ENCODE measurements at regions of chr15 and their contacts with region 1.

Region 1: GRCh38 chr15:74842581-74843444 is at the start of gene ULK3:
- DNase-seq: peak; percentile 84 to 97 (median 92)
- ATAC-seq: peak; percentile 91
- H3K4me3 ChIP-seq: peak within 1 kb of the TSS; percentile 95
- H3K4me3 Mint-ChIP-seq: peak within 1 kb of the TSS; percentile 93
- H3K27ac ChIP-seq: peak within 1 kb of the TSS; percentile 69 to 82
- H3K27ac Mint-ChIP-seq: peak within 1 kb of the TSS; percentile 86
- H3K4me1 ChIP-seq: peaks cover 61% of the 10 kb centered on the region
- H3K4me1 Mint-ChIP-seq: peaks cover 56% of the 10 kb centered on the region
- H3K27me3 ChIP-seq: no peaks in the 10 kb centered on the region
- H3K27me3 Mint-ChIP-seq: no peaks in the 10 kb centered on the region
- CTCF ChIP-seq: peak; percentile 56
- total RNA-seq, gene ULK3: 37.8 to 38.9 TPM

Region 2: GRCh38 chr15:74695597-74696397 is 147.0 kb before region 1 on chr15 and contains the start of gene EDC3:
- CTCF ChIA-PET with region 1: no interaction called
- POLR2A ChIA-PET with region 1: no interaction called
- intact Hi-C with region 1: loop called in 1 of 2 experiments (anchors 10 kb)
- DNase-seq: peak; percentile 70 to 93 (median 80)
- ATAC-seq: peak; percentile 86
- H3K4me3 ChIP-seq: peak within 1 kb of the TSS; percentile 78
- H3K4me3 Mint-ChIP-seq: peak within 1 kb of the TSS; percentile 100
- H3K27ac ChIP-seq: peak within 1 kb of the TSS; percentile 60 to 83
- H3K27ac Mint-ChIP-seq: peak within 1 kb of the TSS; percentile 98
- H3K4me1 ChIP-seq: peaks cover 16% of the 10 kb centered on the region
- H3K4me1 Mint-ChIP-seq: peaks cover 44% of the 10 kb centered on the region
- H3K27me3 ChIP-seq: no peaks in the 10 kb centered on the region
- H3K27me3 Mint-ChIP-seq: peaks cover under 1% of the 10 kb centered on the region
- CTCF ChIP-seq: no peak
- total RNA-seq, gene EDC3: 11.0 to 11.1 TPM

Region 3: DNA sequence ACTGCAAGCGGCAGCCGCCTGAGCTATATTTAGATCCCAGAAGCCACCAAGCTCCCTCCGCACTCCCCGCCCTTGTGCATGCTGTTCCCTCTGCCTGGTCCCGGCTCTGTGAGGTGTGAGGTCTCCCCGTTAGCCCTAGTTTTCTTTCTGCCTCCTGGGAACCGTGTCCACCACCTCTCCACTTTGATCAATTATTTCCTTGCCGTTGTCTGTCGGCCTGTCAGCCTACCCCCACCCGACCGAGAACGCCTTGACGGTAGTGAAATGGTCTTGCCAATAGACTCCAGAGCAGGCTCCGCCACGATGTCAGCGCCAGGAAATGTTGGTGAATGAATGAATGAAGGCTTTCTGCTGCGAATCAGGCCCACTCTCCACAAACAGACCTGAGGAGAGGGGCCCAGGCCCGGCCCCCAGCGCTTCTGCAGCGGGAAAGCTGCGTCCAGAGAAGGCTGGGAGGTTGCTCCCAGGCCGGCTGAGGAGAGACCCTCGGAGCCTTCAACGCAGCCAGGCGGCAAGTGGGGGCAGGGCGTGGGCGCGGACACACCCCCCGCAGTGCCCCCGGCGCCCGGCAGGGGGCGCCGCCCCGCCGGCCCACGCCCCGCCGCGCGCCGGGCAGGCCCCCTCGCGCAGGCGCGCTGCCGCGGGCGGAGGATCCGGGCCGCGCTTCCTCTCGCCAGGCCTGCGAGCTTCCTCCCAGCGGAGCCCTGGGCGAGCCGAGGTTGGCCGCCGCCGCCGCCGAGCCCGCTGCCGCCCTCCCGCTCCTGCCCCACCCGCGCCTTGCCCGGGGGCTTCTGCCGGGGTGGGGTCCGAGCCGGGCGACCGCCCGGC is 61.2 kb before region 1 on chr15 and contains the start of gene CSK:
- CTCF ChIA-PET with region 1: interaction called, 6 read pairs
- POLR2A ChIA-PET with region 1: interaction called, 7 read pairs
- intact Hi-C with region 1: loop called (anchors 2 to 5 kb)
- DNase-seq: peak; percentile 59 to 94 (median 80)
- ATAC-seq: peak; percentile 59
- H3K4me3 ChIP-seq: peak within 1 kb of the TSS; percentile 100
- H3K4me3 Mint-ChIP-seq: peak within 1 kb of the TSS; percentile 90
- H3K27ac ChIP-seq: peak within 1 kb of the TSS; percentile 84 to 93
- H3K27ac Mint-ChIP-seq: peak within 1 kb of the TSS; percentile 94
- H3K4me1 ChIP-seq: peaks cover 88% of the 10 kb centered on the region
- H3K4me1 Mint-ChIP-seq: peaks cover 65% of the 10 kb centered on the region
- H3K27me3 ChIP-seq: no peaks in the 10 kb centered on the region
- H3K27me3 Mint-ChIP-seq: no peaks in the 10 kb centered on the region
- CTCF ChIP-seq: peak; percentile 59
- total RNA-seq, gene CSK: 114 to 118 TPM

Region 4: DNA sequence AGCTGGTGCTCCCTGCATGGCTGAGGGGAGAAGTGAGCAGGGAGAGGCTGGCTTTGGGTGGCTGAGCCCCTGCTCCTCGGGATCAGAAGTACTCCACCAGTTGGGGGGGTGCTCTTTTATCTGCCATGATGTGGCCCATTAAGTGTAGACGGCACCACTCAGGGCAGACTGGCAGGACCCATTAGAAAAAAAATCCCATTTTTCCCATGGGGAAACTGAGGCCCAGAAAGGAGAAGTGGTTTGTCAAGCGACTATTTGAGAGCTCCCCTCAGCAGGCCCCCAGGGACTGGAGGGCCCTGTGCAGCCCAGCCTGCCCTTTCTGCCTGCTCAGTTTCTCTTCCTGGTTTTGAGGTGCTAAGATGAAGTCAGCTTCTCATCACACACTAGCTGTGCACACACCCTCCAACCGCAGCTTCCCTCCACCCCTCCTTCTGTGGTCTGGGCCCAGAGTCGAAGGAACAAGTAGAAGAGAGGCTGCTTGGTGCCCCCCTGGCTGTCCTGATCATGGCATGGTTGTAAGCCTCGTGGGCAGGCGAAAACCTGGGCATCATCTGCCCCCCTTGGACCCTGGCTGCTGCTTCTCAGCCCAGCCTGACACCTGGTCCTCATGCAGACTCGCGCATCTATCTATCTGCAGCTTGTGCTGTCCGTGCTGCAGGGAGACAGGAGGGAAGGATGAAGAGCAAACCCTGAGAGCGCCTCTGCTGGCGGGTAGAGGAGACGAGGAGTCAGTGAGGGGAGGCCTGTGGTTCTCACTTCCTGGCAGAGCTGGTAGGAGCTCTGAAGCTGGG is 55.4 kb before region 1 on chr15:
- CTCF ChIA-PET with region 1: interaction called, 7 read pairs
- POLR2A ChIA-PET with region 1: interaction called, 10 read pairs
- intact Hi-C with region 1: loop called in 1 of 2 experiments (anchors 5 kb)
- DNase-seq: peak; percentile 78 to 98 (median 84)
- ATAC-seq: peak; percentile 72
- H3K4me3 ChIP-seq: peak overlapping the region; percentile 100
- H3K4me3 Mint-ChIP-seq: peak overlapping the region; percentile 90
- H3K27ac ChIP-seq: peak overlapping the region; percentile 69 to 93
- H3K27ac Mint-ChIP-seq: peak overlapping the region; percentile 94
- H3K4me1 ChIP-seq: peaks cover 91% of the 10 kb centered on the region
- H3K4me1 Mint-ChIP-seq: peaks cover 71% of the 10 kb centered on the region
- H3K27me3 ChIP-seq: no peaks in the 10 kb centered on the region
- H3K27me3 Mint-ChIP-seq: no peaks in the 10 kb centered on the region
- CTCF ChIP-seq: peak; percentile 83

Region 5: DNA sequence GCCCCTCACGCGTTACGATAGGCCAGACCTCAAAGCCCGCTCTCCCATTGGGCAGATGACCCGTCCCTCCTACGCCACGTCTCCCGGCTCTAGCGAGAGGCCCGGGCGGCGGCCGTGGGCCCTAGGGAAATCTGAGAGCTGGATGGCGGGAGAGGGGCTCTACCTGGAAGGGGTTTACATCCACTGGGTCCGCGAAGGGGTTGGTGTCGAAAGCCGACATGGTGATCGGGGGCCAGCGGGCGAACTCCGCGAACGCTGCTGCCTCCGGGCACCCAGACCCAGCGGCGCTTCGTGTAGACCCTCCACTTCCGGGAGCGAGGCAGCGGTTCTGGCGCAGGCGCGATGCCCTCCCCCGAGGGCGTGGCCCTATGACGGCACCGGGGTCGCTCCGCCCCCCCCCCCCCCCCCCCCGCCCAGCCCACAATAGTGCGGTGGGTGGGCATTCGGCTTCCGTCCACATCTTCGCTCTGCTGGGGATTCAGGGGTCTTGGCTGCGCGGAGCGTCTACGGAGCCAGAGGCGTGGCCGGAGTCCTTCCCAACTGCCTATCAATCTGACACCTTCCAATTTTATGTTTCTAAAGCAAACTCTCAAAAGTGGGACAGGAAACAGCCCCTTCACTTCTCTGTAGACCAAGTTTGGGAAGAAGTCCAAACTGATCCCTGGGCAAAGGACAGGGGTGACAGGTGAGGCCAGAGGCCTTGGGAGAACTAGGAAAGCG is 30.4 kb after region 1 on chr15 and contains the start of gene SCAMP2:
- CTCF ChIA-PET with region 1: interaction called, 6 read pairs
- POLR2A ChIA-PET with region 1: interaction called, 7 read pairs
- intact Hi-C with region 1: loop called (anchors 1 to 2 kb)
- DNase-seq: peak; percentile 79 to 95 (median 86)
- ATAC-seq: peak; percentile 90
- H3K4me3 ChIP-seq: peak within 1 kb of the TSS; percentile 65
- H3K4me3 Mint-ChIP-seq: peak within 1 kb of the TSS; percentile 94
- H3K27ac ChIP-seq: peak within 1 kb of the TSS; percentile 93 to 94
- H3K27ac Mint-ChIP-seq: peak within 1 kb of the TSS; percentile 90
- H3K4me1 ChIP-seq: peaks cover 50% of the 10 kb centered on the region
- H3K4me1 Mint-ChIP-seq: peaks cover 45% of the 10 kb centered on the region
- H3K27me3 ChIP-seq: no peaks in the 10 kb centered on the region
- H3K27me3 Mint-ChIP-seq: no peaks in the 10 kb centered on the region
- CTCF ChIP-seq: no peak
- total RNA-seq, gene SCAMP2: 56.1 to 56.9 TPM

Region 6: DNA sequence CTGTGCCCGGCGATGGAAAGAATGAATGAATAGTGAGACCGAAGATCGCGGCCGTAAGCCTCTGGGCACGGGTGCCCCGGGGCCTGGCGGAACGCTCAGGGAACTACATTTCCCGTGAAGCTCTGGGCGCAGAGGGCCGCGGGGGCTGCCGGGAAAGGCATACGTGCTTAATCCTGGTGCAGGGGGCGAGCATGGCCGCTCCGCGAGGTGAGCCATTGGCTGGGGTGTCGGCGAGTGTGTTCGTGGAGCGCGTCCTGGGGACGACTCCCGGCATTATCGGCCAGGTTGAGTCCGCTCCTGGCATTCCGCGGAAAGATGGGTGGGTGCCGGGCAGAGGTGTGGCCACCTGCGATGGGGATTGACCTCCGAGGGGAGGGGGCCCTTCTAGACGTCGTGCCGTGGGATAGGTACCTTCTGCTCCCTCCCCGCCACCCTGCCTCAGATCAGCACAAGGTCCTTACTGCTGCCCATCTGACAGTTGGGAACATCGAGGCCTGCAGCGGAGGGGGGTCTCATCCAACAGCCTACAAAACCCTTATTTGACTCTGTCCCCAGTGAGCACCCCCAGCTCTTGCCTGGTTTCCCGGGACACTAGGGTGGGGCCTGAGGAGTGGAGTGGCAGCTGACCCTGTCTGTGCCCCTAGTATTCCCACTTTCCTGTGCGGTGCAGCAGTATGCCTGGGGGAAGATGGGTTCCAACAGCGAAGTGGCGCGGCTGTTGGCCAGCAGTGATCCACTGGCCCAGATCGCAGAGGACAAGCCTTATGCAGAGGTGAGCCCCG is 47.3 kb after region 1 on chr15 and contains the start of gene MPI:
- CTCF ChIA-PET with region 1: no interaction called
- POLR2A ChIA-PET with region 1: interaction called, 8 read pairs
- intact Hi-C with region 1: loop called (anchors 2 to 5 kb)
- DNase-seq: peak; percentile 70 to 90 (median 78)
- ATAC-seq: peak; percentile 92
- H3K4me3 ChIP-seq: peak within 1 kb of the TSS; percentile 92
- H3K4me3 Mint-ChIP-seq: peak within 1 kb of the TSS; percentile 88
- H3K27ac ChIP-seq: peak within 1 kb of the TSS; percentile 71 to 89
- H3K27ac Mint-ChIP-seq: peak within 1 kb of the TSS; percentile 86
- H3K4me1 ChIP-seq: peaks cover 56% of the 10 kb centered on the region
- H3K4me1 Mint-ChIP-seq: peaks cover 43% of the 10 kb centered on the region
- H3K27me3 ChIP-seq: no peaks in the 10 kb centered on the region
- H3K27me3 Mint-ChIP-seq: no peaks in the 10 kb centered on the region
- CTCF ChIP-seq: no peak
- total RNA-seq, gene MPI: 28.9 to 30.3 TPM

Region 7: GRCh38 chr15:74906446-74907162 is 63.8 kb after region 1 on chr15 and contains the start of gene FAM219B:
- CTCF ChIA-PET with region 1: interaction called, 12 read pairs
- POLR2A ChIA-PET with region 1: interaction called, 13 read pairs
- intact Hi-C with region 1: loop called (anchors 1 to 2 kb)
- DNase-seq: peak; percentile 42 to 86 (median 64)
- ATAC-seq: peak; percentile 72
- H3K4me3 ChIP-seq: peak within 1 kb of the TSS; percentile 95
- H3K4me3 Mint-ChIP-seq: peak within 1 kb of the TSS; percentile 99
- H3K27ac ChIP-seq: peak within 1 kb of the TSS; percentile 68 to 80
- H3K27ac Mint-ChIP-seq: peak within 1 kb of the TSS; percentile 99
- H3K4me1 ChIP-seq: peaks cover 38% of the 10 kb centered on the region
- H3K4me1 Mint-ChIP-seq: peaks cover 42% of the 10 kb centered on the region
- H3K27me3 ChIP-seq: no peaks in the 10 kb centered on the region
- H3K27me3 Mint-ChIP-seq: no peaks in the 10 kb centered on the region
- CTCF ChIP-seq: no peak
- total RNA-seq, gene FAM219B: 21.5 to 26.8 TPM